Activated CD8-positive, alpha-beta memory T cell treated with anti-CD3 and anti-CD28 coated beads, Interleukin-2, amount 10 ng/mL, durations not matched to agents 7 days and 5 days (primary cell): ENCODE measurements at regions of chr14 and their contacts with region 1.

Region 1: GRCh38 chr14:49461529-49462401 is 124.4 kb downstream of the RPS29 start:
- DNase-seq: peak; percentile 71
- ATAC-seq: peak; percentile 85
- H3K4me3 Mint-ChIP-seq: no peak overlapping the region
- H3K27ac Mint-ChIP-seq: no peak overlapping the region
- H3K4me1 Mint-ChIP-seq: no peaks in the 10 kb centered on the region
- H3K27me3 Mint-ChIP-seq: peaks cover 23% of the 10 kb centered on the region

Region 2: DNA sequence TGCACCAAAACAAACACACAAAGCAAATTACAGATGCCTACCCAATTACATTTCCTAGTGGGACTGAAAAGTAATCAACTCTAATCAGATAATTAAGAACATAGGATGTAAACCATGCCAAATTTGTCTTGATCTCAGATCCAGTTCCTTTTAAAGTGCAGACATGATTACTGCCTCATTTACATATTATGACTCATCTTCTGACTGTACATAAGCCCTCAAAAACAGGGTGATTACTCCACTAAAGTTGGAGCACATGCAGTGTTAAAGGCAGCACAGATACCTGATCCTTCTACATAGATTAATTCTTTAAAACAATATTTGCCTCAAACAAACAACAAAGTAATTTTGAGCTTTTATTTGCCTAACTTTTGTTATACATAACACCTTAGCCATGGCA is 212.7 kb before region 1 on chr14:
- CTCF ChIA-PET with region 1: no interaction called
- DNase-seq: no peak
- ATAC-seq: no peak
- H3K4me3 Mint-ChIP-seq: no peak overlapping the region
- H3K27ac Mint-ChIP-seq: no peak overlapping the region
- H3K4me1 Mint-ChIP-seq: no peaks in the 10 kb centered on the region
- H3K27me3 Mint-ChIP-seq: no peaks in the 10 kb centered on the region

Region 3: GRCh38 chr14:49497725-49498348 is 36.1 kb after region 1 on chr14:
- CTCF ChIA-PET with region 1: interaction called, 56 read pairs
- DNase-seq: no peak
- ATAC-seq: peak; percentile 49
- H3K4me3 Mint-ChIP-seq: no peak overlapping the region
- H3K27ac Mint-ChIP-seq: no peak overlapping the region
- H3K4me1 Mint-ChIP-seq: no peaks in the 10 kb centered on the region
- H3K27me3 Mint-ChIP-seq: peaks cover 26% of the 10 kb centered on the region